HepG2 (cell line): ENCODE measurements at regions of chr2 and their contacts with region 1.

Region 1: GRCh38 chr2:73176881-73177644 is 25.3 kb upstream of the NOTO start:
- DNase-seq: peak; percentile 78
- ATAC-seq: peak; percentile 81
- H3K4me3 ChIP-seq: peak overlapping the region; percentile 57 to 77 (median 59)
- H3K27ac ChIP-seq: no peak overlapping the region
- H3K4me1 ChIP-seq: peaks cover 48% of the 10 kb centered on the region
- H3K27me3 ChIP-seq: peaks cover 7 to 61% of the 10 kb centered on the region in 2 experiments; a peak in 4 of 5 replicates
- CTCF ChIP-seq: peak; percentile 100
- EP300 ChIP-seq: peak in 1 of 2 experiments; percentile 11; a peak in 1 of 4 replicates
- POLR2A ChIP-seq: no peak
- RAD21 ChIP-seq: peak; percentile 99

Region 2: DNA sequence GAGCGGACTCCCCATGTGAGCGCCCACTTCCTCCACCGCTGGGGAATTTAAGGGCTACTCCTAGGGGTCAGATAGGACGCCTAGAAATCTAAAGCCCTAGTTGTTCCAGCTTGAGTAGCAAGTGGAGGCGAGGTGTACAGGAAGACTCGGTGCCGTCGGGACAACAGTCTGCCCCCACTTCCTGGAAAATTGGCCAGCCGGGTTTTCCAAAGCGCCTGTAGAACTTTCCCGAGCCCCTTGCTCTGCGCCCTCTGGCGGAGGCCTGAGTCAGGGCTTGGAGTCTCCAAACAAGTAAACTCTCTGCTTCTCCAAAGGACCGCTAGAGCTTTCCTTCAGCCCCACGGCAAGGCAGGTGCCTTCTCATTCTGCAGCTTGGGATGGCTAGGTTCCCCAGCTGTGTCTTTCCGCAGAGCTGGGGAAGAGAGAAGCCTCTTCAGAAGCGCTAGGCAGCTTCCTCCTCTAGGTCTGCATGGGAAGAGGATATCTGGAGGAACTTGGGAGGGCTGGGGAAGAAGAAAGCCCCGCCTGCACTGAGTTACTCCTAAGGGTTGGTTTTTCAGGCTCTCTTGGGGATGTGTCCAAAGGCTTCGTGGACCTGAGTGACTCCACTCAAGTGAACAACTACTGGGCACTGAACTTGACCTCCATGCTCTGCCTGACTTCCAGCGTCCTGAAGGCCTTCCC is 289.2 kb before region 1 on chr2:
- CTCF ChIA-PET with region 1: interaction called, 4 read pairs
- POLR2A ChIA-PET with region 1: interaction called, 6 read pairs
- in situ Hi-C with region 1: loop called (anchors 5 kb)
- intact Hi-C with region 1: no loop called
- DNase-seq: peak; percentile 89
- ATAC-seq: peak; percentile 68
- H3K4me3 ChIP-seq: peak overlapping the region; percentile 66 to 79 (median 70)
- H3K27ac ChIP-seq: peak overlapping the region; percentile 69
- H3K4me1 ChIP-seq: peaks cover 37% of the 10 kb centered on the region
- H3K27me3 ChIP-seq: no peaks in the 10 kb centered on the region; a peak in 1 of 5 replicates
- CTCF ChIP-seq: peak; percentile 93
- EP300 ChIP-seq: peak in 1 of 2 experiments; percentile 61; a peak in 2 of 4 replicates
- POLR2A ChIP-seq: peak in 1 of 2 experiments; percentile 37; a peak in 1 of 4 replicates
- RAD21 ChIP-seq: peak; percentile 73

Region 3: GRCh38 chr2:72993147-72993932 is 183.7 kb before region 1 on chr2:
- CTCF ChIA-PET with region 1: interaction called, 16 read pairs
- POLR2A ChIA-PET with region 1: no interaction called
- in situ Hi-C with region 1: no loop called
- intact Hi-C with region 1: loop called (anchors 5 kb)
- DNase-seq: peak; percentile 58
- ATAC-seq: peak; percentile 67
- H3K4me3 ChIP-seq: no peak overlapping the region
- H3K27ac ChIP-seq: peak overlapping the region; percentile 20
- H3K4me1 ChIP-seq: peaks cover 13% of the 10 kb centered on the region
- H3K27me3 ChIP-seq: no peaks in the 10 kb centered on the region
- CTCF ChIP-seq: peak; percentile 89
- EP300 ChIP-seq: no peak
- POLR2A ChIP-seq: no peak
- RAD21 ChIP-seq: peak; percentile 94

Region 4: DNA sequence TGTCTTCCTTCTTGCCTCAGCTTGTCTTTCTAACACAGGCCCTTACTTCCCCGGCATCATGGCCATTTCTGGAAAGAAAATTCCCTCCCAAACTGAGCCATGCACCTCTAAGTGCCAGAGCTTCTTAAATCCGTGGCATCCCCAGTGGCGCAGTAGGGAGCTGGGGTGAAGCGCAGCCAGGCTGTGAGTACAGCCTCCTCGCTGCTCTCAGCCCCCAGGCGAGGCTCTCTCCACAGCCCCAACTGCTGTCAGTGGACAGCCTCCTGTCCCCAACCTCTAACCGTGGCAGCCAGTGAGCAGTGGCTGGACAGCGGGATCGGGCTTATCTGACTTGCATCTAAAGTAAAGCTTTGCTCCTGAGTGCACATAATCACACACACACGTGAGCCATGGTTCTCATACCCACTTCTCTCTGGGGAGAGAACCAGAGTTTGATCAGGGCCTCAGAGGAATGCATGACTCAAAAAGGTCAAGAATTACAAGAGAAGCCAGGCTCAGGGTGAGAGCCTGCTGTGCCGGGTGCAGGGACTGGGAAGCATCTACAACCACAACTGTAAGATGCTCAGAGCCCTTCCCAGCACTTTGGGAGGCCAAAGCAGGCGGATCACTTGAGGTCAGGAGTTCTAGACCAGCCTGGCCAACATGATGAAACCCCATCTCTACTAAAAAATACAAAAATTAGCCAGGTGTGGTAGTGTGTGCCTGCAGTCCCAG is 156.2 kb before region 1 on chr2:
- CTCF ChIA-PET with region 1: no interaction called
- POLR2A ChIA-PET with region 1: no interaction called
- in situ Hi-C with region 1: no loop called
- intact Hi-C with region 1: no loop called
- DNase-seq: peak; percentile 97
- ATAC-seq: peak; percentile 91
- H3K4me3 ChIP-seq: peak overlapping the region in 1 of 3 experiments; percentile 29; a peak in 1 of 6 replicates
- H3K27ac ChIP-seq: peak overlapping the region; percentile 71
- H3K4me1 ChIP-seq: peaks cover 35% of the 10 kb centered on the region
- H3K27me3 ChIP-seq: no peaks in the 10 kb centered on the region
- CTCF ChIP-seq: 0 out of 2 replicates have a peak, but pooled peaks have one; percentile 14
- EP300 ChIP-seq: peak in 1 of 2 experiments; percentile 79; a peak in 2 of 4 replicates
- POLR2A ChIP-seq: no peak
- RAD21 ChIP-seq: peak; percentile 51

Region 5: GRCh38 chr2:73085691-73086360 is 91.2 kb before region 1 on chr2:
- CTCF ChIA-PET with region 1: interaction called, 41 read pairs
- POLR2A ChIA-PET with region 1: no interaction called
- in situ Hi-C with region 1: no loop called
- intact Hi-C with region 1: loop called (anchors 1 kb)
- DNase-seq: peak; percentile 74
- ATAC-seq: peak; percentile 90
- H3K4me3 ChIP-seq: no peak overlapping the region
- H3K27ac ChIP-seq: no peak overlapping the region
- H3K4me1 ChIP-seq: peaks cover 16% of the 10 kb centered on the region
- H3K27me3 ChIP-seq: no peaks in the 10 kb centered on the region
- CTCF ChIP-seq: peak; percentile 99
- EP300 ChIP-seq: no peak
- POLR2A ChIP-seq: no peak
- RAD21 ChIP-seq: peak; percentile 99

Region 6: DNA sequence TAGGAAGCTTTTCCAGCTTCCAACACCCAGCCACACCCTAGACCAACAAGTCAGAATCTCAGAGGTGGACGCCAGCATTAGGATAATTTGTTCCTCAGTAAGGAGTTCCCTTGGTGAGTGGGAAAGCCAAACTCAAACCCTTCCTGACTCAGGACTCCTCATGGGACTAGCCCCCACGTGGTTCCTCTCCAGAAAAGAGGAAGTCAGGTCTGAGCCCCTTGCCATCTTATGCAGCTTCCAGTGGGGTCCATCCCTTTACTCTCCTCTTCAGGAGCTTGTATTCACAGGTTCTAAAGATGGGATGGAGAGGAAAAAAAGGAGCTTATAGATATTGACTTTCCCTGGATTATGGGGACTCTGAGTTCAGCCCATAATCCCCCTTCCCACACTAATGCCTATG is 10.5 kb after region 1 on chr2:
- CTCF ChIA-PET with region 1: interaction called, 8 read pairs
- POLR2A ChIA-PET with region 1: interaction called, 12 read pairs
- in situ Hi-C with region 1: no loop called
- intact Hi-C with region 1: no loop called
- DNase-seq: no peak
- ATAC-seq: no peak
- H3K4me3 ChIP-seq: no peak overlapping the region
- H3K27ac ChIP-seq: no peak overlapping the region
- H3K4me1 ChIP-seq: peaks cover 49% of the 10 kb centered on the region
- H3K27me3 ChIP-seq: 0 out of 5 replicates have a peak, but pooled peaks cover 0 to 4% of the 10 kb centered on the region in 2 experiments
- CTCF ChIP-seq: no peak
- EP300 ChIP-seq: no peak
- POLR2A ChIP-seq: no peak
- RAD21 ChIP-seq: no peak

Region 7: DNA sequence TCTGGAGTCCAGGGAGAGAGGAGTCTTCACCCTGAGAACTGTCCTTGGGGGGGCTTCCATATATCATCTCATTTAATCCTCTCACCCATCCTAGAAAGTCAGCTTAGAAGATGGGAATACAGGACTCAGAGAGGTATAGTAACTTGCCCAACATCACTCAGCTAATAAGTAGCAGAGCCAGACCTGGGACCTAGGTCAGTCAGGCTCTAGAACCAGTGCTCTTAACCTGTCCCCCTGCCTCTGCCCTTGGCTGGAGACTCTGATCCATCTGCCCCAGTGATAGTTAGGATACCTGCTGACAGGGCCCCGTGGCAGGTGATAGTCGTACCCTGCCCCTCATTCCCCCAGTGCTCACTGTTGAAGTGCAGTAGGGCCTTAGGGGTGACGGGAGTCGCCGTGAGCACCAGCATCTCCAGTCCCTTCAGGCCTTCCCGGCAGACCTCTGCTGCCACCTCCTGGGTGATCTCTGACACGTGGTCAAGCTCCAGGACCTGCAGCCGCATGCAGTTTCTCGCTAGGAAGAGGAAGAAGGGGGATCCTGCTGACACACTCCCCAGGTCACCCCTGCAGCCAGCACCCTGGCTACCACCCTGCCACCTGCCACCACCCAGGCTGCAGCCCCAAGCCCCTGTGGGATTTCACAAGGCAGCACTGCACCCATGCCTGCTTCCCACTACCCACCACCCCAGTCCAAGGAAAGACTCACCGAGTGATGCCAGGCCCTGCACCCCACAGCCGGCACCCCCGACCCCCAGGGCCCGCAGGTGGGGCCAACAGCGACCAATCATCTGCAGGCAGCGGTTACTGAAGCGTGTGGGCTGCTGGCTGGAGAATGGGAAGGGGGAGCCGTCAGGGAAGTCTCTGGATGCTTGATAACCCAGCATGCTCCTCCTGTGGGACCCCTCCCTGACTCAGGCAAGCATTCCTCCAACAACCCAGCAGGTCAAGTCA is 83.2 kb after region 1 on chr2:
- CTCF ChIA-PET with region 1: interaction called, 8 read pairs
- POLR2A ChIA-PET with region 1: no interaction called
- in situ Hi-C with region 1: no loop called
- intact Hi-C with region 1: loop called (anchors 5 kb)
- DNase-seq: peak; percentile 72
- ATAC-seq: peak; percentile 65
- H3K4me3 ChIP-seq: no peak overlapping the region
- H3K27ac ChIP-seq: no peak overlapping the region
- H3K4me1 ChIP-seq: peaks cover 51% of the 10 kb centered on the region
- H3K27me3 ChIP-seq: no peaks in the 10 kb centered on the region
- CTCF ChIP-seq: peak; percentile 96
- EP300 ChIP-seq: no peak
- POLR2A ChIP-seq: no peak
- RAD21 ChIP-seq: peak; percentile 89